H1 (cell line): ENCODE measurements at regions of chr6 and their contacts with region 1.

Region 1: DNA sequence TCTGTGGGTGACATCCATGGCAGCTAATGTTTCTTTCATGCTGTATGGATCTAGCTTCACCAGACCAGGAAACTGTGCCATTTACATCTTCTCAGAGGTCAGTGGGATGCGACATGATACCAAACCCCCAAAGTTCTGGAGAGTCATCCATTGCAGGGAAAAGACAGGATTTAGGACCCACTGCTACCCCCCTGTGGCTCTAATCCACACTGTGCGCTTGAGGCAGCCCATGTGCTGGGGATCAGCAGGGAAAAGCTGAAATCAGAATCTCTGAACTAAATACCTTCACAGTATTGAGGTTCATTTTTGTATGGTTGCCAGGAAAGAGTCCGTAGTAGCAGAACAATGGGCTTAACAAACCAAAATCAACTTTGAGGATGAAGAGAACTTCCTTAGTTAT is 164.4 kb downstream of the TMEM242 start:
- DNase-seq: no peak
- H3K4me3 ChIP-seq: no peak overlapping the region
- H3K27ac ChIP-seq: no peak overlapping the region
- H3K4me1 ChIP-seq: peaks cover 3 to 17% (median 13%) of the 10 kb centered on the region in 4 experiments
- H3K27me3 ChIP-seq: no peaks in the 10 kb centered on the region
- CTCF ChIP-seq: peak; percentile 17 to 36 (median 34)
- EP300 ChIP-seq: no peak
- POLR2A ChIP-seq: no peak
- RAD21 ChIP-seq: peak; percentile 42 to 53

Region 2: GRCh38 chr6:157034436-157035230 is 124.3 kb before region 1 on chr6:
- CTCF ChIA-PET with region 1: interaction called, 10 read pairs
- POLR2A ChIA-PET with region 1: no interaction called
- DNase-seq: no peak
- H3K4me3 ChIP-seq: no peak overlapping the region
- H3K27ac ChIP-seq: no peak overlapping the region
- H3K4me1 ChIP-seq: peaks cover 8 to 22% (median 15%) of the 10 kb centered on the region in 4 experiments
- H3K27me3 ChIP-seq: no peaks in the 10 kb centered on the region
- CTCF ChIP-seq: peak in 2 of 3 experiments; percentile 44 to 56; a peak in 2 of 4 replicates
- EP300 ChIP-seq: no peak
- POLR2A ChIP-seq: no peak
- RAD21 ChIP-seq: peak; percentile 63 to 66

Region 3: GRCh38 chr6:157045831-157046454 is 113.0 kb before region 1 on chr6:
- CTCF ChIA-PET with region 1: interaction called, 11 read pairs
- POLR2A ChIA-PET with region 1: no interaction called
- DNase-seq: no peak
- H3K4me3 ChIP-seq: no peak overlapping the region
- H3K27ac ChIP-seq: no peak overlapping the region
- H3K4me1 ChIP-seq: peaks cover 0 to 7% (median 2%) of the 10 kb centered on the region in 4 experiments; a peak in 3 of 7 replicates
- H3K27me3 ChIP-seq: no peaks in the 10 kb centered on the region
- CTCF ChIP-seq: peak in 1 of 3 experiments; percentile 27; a peak in 1 of 4 replicates
- EP300 ChIP-seq: no peak
- POLR2A ChIP-seq: no peak
- RAD21 ChIP-seq: peak; percentile 46 to 50; a peak in 3 of 4 replicates

Region 4: GRCh38 chr6:157143171-157143889 is 15.6 kb before region 1 on chr6:
- CTCF ChIA-PET with region 1: interaction called, 88 read pairs
- POLR2A ChIA-PET with region 1: interaction called, 3 read pairs
- DNase-seq: no peak
- H3K4me3 ChIP-seq: no peak overlapping the region
- H3K27ac ChIP-seq: no peak overlapping the region
- H3K4me1 ChIP-seq: peaks cover 5 to 17% (median 13%) of the 10 kb centered on the region in 4 experiments
- H3K27me3 ChIP-seq: no peaks in the 10 kb centered on the region
- CTCF ChIP-seq: no peak
- EP300 ChIP-seq: no peak
- POLR2A ChIP-seq: no peak
- RAD21 ChIP-seq: no peak

Region 5: DNA sequence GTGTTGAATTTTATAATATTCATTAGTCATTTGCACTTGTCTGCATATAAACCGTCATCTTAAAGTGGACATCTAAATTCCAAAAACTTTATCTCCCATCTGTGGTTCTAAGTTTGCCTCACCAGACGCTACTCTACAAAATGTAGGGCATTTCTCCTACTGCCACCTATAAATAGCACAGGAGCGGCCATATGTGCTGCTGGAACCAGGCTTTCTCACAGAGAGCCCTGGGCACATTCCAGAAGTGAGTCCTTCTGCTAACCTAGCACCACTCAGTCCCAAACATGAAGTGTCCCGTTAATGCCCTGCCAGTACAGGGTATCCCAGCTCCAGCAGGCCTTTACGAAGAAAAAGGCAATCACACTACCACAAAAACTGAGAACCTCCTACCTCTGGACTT is 10.8 kb after region 1 on chr6:
- CTCF ChIA-PET with region 1: interaction called, 7 read pairs
- POLR2A ChIA-PET with region 1: interaction called, 11 read pairs
- DNase-seq: no peak
- H3K4me3 ChIP-seq: no peak overlapping the region
- H3K27ac ChIP-seq: no peak overlapping the region
- H3K4me1 ChIP-seq: peaks cover 0 to 11% (median 0%) of the 10 kb centered on the region in 4 experiments; a peak in 2 of 7 replicates
- H3K27me3 ChIP-seq: no peaks in the 10 kb centered on the region
- CTCF ChIP-seq: no peak
- EP300 ChIP-seq: no peak
- POLR2A ChIP-seq: no peak
- RAD21 ChIP-seq: no peak

Region 6: DNA sequence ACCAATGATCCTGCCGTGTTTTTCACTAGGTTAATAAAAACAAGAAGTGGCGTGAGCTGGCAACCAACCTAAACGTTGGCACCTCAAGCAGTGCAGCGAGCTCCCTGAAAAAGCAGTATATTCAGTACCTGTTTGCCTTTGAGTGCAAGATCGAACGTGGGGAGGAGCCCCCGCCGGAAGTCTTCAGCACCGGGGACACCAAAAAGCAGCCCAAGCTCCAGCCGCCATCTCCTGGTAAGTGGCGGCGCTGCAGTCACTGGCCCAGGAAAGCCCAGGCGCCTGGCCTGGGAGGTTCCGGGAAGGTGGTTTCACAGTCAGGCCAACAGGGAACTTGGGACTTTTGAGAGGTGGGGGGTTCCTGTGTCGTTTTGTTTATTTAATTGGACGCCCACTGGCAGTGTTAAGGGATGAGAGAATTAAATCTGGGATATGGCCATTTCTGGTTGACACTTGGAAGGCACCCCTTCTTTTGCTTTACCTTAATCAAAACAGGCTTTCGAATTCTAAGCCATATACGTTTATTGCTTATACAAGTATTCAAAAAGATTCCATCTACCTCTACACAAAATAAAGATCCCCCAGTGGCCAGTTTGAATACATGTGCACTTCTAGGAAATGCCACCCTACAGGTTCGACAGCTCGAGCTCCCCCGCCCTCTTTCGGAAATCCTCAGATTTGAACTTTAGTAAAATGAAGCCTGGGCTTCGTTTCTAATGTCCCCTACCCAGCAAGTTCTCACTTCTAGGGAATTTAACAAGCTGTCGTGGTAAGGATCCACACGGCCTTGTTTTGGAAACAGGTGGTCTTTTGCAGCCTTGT is 25.5 kb after region 1 on chr6:
- CTCF ChIA-PET with region 1: interaction called, 13 read pairs
- POLR2A ChIA-PET with region 1: interaction called, 4 read pairs
- DNase-seq: peak; percentile 57 to 87
- H3K4me3 ChIP-seq: no peak overlapping the region
- H3K27ac ChIP-seq: no peak overlapping the region
- H3K4me1 ChIP-seq: no peaks in the 10 kb centered on the region
- H3K27me3 ChIP-seq: no peaks in the 10 kb centered on the region
- CTCF ChIP-seq: peak; percentile 86 to 96 (median 93)
- EP300 ChIP-seq: no peak
- POLR2A ChIP-seq: no peak
- RAD21 ChIP-seq: peak; percentile 98 to 99